GM18951 (cell line): ENCODE measurements at regions of chr7 and their contacts with region 1.

Region 1: GRCh38 chr7:85041605-85042216 is 145.1 kb downstream of the SEMA3D start:
- POLR2A ChIP-seq: no peak

Region 2: GRCh38 chr7:85750454-85750949 is 708.8 kb after region 1 on chr7:
- in situ Hi-C with region 1: loop called (anchors 25 kb)
- POLR2A ChIP-seq: no peak

Region 3: DNA sequence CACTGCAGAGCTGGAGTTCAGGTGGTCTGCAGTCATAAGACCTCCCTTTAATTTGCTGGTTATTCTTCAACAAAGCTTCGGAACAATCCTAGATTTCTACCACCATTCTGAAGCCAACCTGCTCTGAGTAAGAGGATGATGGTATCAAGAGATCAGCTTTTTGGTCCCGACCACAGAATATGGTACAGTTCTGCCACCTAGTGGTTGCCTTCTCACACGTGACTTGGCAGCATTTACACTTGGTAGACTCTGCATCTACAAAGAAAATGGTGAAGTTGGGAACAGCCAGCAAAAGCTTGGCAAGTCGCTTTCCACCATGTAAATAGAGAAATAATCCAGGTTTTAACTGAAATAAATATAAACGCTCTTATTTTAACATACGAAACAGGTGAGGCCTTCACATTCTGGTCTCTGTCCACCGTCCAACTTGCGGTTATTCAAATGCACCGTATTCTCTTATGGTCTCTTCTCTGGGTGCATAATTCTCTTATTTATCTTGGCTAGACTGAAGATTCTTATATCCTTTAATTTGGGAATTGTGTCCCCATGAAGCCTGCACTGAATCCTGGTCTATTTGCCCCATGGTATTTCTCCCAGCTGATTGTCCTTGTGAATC is 1428.1 kb after region 1 on chr7:
- in situ Hi-C with region 1: loop called (anchors 25 kb)
- POLR2A ChIP-seq: no peak